Lower lobe of right lung (tissue), 2 donors: ENCODE measurements at regions of chr2 and their contacts with region 1.

Region 1: GRCh38 chr2:64865073-64865830 is 123.9 kb upstream of the SLC1A4 start:
- DNase-seq: peak; percentile 79
- ATAC-seq: peak; percentile 92 to 94
- H3K4me3 ChIP-seq: peak overlapping the region; percentile 78
- H3K27ac ChIP-seq: peak overlapping the region; percentile 95
- H3K4me1 ChIP-seq: peaks cover 25% of the 10 kb centered on the region
- H3K27me3 ChIP-seq: no peaks in the 10 kb centered on the region
- CTCF ChIP-seq: peak; percentile 65

Region 2: GRCh38 chr2:64586883-64587481 is 278.3 kb before region 1 on chr2:
- intact Hi-C with region 1: loop called (anchors 10 kb)
- DNase-seq: no peak
- ATAC-seq: peak; percentile 64 to 68
- H3K4me3 ChIP-seq: no peak overlapping the region
- H3K27ac ChIP-seq: no peak overlapping the region
- H3K4me1 ChIP-seq: peaks cover 6% of the 10 kb centered on the region
- H3K27me3 ChIP-seq: no peaks in the 10 kb centered on the region
- CTCF ChIP-seq: peak; percentile 54

Region 3: GRCh38 chr2:64644177-64645004 is 220.9 kb before region 1 on chr2:
- intact Hi-C with region 1: loop called (anchors 10 kb)
- DNase-seq: peak; percentile 87
- ATAC-seq: peak; percentile 89 to 90
- H3K4me3 ChIP-seq: peak overlapping the region; percentile 49
- H3K27ac ChIP-seq: peak overlapping the region; percentile 89
- H3K4me1 ChIP-seq: peaks cover 69% of the 10 kb centered on the region
- H3K27me3 ChIP-seq: no peaks in the 10 kb centered on the region
- CTCF ChIP-seq: no peak